GM13976 (cell line): ENCODE measurements at regions of chr5 and their contacts with region 1.

Region 1: GRCh38 chr5:76402886-76403765 is at the start of gene IQGAP2:
- DNase-seq: peak; percentile 89
- CTCF ChIP-seq: peak; percentile 97

Region 2: DNA sequence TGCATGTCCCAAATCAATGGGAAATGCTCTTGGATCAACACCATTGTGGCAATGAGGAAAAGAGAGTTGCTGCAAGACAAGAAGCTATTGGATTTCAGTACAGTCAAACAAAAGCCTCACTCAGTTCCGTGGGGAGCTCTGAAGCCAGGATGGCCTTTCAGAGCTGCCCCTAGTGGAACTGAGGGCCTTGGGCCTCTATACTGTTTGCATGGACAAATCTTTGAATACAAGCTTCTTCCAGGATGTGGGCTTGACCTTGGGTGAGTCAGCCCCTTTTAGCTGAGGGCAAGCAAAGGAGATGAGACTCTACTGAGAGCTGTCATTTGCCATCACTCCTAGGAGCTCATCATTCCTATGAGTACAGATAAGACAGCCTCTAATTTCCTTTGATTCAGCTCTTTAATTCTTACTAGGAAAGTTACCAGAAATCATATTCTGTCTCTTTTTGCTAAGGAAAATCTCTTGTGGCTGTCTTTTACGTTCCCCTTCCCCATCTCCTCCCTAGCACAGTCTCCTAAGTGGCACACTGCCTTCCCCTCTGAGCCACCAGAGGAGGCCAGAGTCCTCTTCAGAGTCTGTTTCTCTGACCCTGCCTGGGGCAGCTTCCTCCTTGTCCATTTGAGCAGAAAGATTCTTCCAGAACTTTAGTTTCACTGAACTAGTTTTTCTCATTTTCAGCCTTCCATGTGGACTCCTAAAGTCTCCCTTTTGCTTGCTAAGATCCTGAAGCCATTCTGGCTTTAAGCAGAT is 517.1 kb before region 1 on chr5:
- in situ Hi-C with region 1: no loop called
- DNase-seq: no peak
- CTCF ChIP-seq: peak; percentile 56

Region 3: DNA sequence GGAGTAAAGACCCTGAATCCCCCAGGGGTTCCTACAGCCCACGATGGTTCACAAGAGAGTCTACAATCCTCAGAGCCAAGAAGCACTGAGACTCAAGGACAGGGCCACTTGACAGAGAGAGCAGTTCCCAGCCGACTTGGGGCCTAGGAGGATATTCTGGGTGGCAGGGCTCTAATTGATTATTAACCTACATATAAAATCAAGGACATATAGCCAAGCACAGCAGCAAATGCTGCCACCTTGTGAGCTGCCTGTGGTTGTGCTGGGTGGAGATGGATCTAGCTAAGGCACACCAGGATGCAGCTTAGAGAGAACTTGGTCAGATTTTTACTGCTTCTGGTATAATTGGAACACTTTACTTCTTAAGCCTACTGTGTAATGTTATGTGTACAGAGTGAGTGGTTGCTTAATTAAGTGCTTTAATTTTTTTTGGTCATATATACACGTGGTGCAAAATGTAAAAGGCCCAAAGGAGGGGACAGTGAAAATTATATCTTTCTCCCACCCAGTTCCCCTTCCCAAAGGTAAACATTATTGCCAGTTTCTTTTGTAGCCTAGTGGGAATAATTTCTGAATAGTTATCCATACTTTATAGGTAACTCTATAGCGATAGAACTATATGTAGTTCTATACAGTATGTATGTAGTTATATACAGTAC is 141.3 kb after region 1 on chr5:
- in situ Hi-C with region 1: loop called (anchors 10 kb)
- DNase-seq: peak; percentile 34
- CTCF ChIP-seq: peak; percentile 60